CD8-positive, alpha-beta T cell (primary cell): ENCODE measurements at regions of chr12 and their contacts with region 1.

Region 1: DNA sequence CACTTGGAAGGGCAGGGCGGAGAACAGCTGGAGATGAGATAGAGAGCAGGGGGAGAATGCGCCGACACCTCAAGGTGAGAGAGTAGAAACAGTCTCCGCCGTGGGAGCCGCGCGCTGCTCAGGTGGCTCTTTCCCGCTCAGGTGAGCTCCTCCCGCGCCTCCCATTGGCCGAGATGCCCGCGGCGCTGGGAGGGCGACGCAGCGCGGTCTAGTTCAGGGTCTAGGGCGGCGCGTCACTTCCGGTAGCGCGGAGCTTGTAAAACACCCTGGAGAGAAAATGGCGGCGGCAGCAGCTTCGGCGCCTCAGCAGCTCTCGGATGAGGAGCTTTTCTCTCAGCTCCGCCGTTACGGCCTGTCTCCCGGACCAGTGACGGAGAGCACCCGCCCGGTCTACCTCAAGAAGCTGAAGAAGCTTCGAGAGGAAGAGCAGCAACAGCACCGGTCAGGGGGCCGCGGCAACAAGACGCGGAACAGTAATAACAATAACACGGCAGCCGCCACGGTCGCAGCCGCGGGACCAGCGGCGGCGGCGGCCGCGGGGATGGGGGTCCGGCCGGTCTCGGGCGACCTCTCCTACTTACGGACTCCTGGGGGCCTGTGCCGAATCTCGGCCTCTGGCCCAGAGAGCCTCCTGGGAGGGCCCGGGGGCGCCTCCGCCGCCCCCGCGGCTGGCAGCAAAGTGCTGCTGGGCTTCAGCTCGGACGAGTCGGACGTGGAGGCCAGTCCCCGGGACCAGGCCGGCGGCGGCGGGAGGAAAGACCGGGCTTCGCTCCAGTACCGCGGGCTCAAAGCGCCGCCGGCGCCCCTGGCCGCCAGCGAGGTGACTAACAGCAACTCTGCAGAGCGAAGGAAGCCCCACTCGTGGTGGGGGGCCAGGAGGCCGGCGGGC is at the start of gene LEMD3:
- DNase-seq: peak; percentile 87 to 98 (median 94)
- ATAC-seq: peak; percentile 87
- H3K4me3 ChIP-seq: peak within 1 kb of the TSS; percentile 82 to 91
- H3K4me3 Mint-ChIP-seq: peak within 1 kb of the TSS; percentile 99
- H3K27ac ChIP-seq: peak within 1 kb of the TSS; percentile 83 to 94
- H3K27ac Mint-ChIP-seq: peak within 1 kb of the TSS; percentile 100
- H3K4me1 ChIP-seq: peaks cover 37% of the 10 kb centered on the region
- H3K4me1 Mint-ChIP-seq: peaks cover 45% of the 10 kb centered on the region
- H3K27me3 ChIP-seq: no peaks in the 10 kb centered on the region
- H3K27me3 Mint-ChIP-seq: no peaks in the 10 kb centered on the region
- CTCF ChIP-seq: no peak
- total RNA-seq, gene LEMD3: 75.2 to 77.9 TPM

Region 2: GRCh38 chr12:63779498-63780481 is 1389.8 kb before region 1 on chr12 and contains the start of gene RXYLT1:
- CTCF ChIA-PET with region 1: no interaction called
- POLR2A ChIA-PET with region 1: no interaction called
- intact Hi-C with region 1: loop called in 1 of 2 experiments (anchors 5 kb)
- DNase-seq: peak; percentile 66 to 93 (median 83)
- ATAC-seq: peak; percentile 93
- H3K4me3 ChIP-seq: peak within 1 kb of the TSS; percentile 76 to 79
- H3K4me3 Mint-ChIP-seq: peak within 1 kb of the TSS; percentile 96
- H3K27ac ChIP-seq: peak within 1 kb of the TSS; percentile 74 to 87
- H3K27ac Mint-ChIP-seq: peak within 1 kb of the TSS; percentile 96
- H3K4me1 ChIP-seq: peaks cover 8% of the 10 kb centered on the region
- H3K4me1 Mint-ChIP-seq: peaks cover 32% of the 10 kb centered on the region
- H3K27me3 ChIP-seq: no peaks in the 10 kb centered on the region
- H3K27me3 Mint-ChIP-seq: no peaks in the 10 kb centered on the region
- CTCF ChIP-seq: no peak
- total RNA-seq, gene RXYLT1: 5.5 to 5.8 TPM

Region 3: DNA sequence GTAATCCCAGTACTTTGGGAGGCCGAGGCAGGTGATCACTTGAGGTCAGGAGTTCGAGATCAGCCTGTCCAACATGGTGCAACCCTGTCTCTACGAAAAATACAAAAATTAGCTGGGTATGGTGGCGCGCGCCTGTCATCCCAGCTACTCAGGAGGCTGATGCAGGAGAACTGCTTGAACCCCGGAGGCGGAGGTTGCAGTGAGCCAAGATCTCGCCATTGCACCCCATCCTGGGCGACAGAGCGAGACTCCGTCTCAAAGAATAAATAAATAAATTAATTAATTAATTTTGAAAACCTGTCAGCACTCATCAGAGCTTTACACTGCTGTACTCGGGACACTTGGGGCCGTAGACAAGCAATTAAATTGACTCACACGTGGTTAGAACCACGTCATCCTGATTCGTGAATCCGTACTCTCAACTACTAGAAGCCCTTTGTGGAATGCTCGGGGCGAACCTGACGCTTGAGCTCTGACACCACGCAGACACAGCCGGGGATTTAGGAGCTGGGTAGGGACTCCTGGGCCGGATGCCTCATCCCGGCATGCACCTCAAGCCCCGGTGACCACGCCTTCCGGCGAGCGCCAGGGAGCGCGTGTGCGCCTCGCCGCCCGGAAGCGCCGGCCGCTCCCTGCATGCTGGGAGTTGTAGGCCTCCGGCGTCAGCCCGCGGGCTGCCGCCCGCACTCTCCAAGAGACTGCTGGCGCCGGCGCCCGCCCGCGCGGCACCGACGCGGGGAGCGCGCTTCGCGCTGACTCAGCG is 765.7 kb before region 1 on chr12 and contains the start of gene XPOT:
- CTCF ChIA-PET with region 1: no interaction called
- POLR2A ChIA-PET with region 1: interaction called, 3 read pairs
- intact Hi-C with region 1: loop called in 1 of 2 experiments (anchors 1 kb)
- DNase-seq: peak; percentile 85 to 99 (median 90)
- ATAC-seq: peak; percentile 87
- H3K4me3 ChIP-seq: peak within 1 kb of the TSS; percentile 92 to 98
- H3K4me3 Mint-ChIP-seq: peak within 1 kb of the TSS; percentile 97
- H3K27ac ChIP-seq: peak within 1 kb of the TSS; percentile 79 to 85
- H3K27ac Mint-ChIP-seq: peak within 1 kb of the TSS; percentile 98
- H3K4me1 ChIP-seq: peaks cover 9% of the 10 kb centered on the region
- H3K4me1 Mint-ChIP-seq: peaks cover 28% of the 10 kb centered on the region
- H3K27me3 ChIP-seq: no peaks in the 10 kb centered on the region
- H3K27me3 Mint-ChIP-seq: no peaks in the 10 kb centered on the region
- CTCF ChIP-seq: no peak
- total RNA-seq, gene XPOT: 37.9 to 39.5 TPM

Region 4: GRCh38 chr12:65156366-65156841 is 13.2 kb before region 1 on chr12:
- CTCF ChIA-PET with region 1: interaction called, 4 read pairs
- POLR2A ChIA-PET with region 1: interaction called, 19 read pairs
- intact Hi-C with region 1: no loop called
- DNase-seq: peak in 3 of 9 experiments; percentile 15 to 44 (median 17)
- ATAC-seq: peak; percentile 54
- H3K4me3 ChIP-seq: no peak overlapping the region
- H3K4me3 Mint-ChIP-seq: peak overlapping the region; percentile 17
- H3K27ac ChIP-seq: peak overlapping the region in 1 of 2 experiments; percentile 57
- H3K27ac Mint-ChIP-seq: peak overlapping the region; percentile 27
- H3K4me1 ChIP-seq: peaks cover 9% of the 10 kb centered on the region
- H3K4me1 Mint-ChIP-seq: peaks cover 11% of the 10 kb centered on the region
- H3K27me3 ChIP-seq: no peaks in the 10 kb centered on the region
- H3K27me3 Mint-ChIP-seq: peaks cover 13% of the 10 kb centered on the region
- CTCF ChIP-seq: no peak

Region 5: GRCh38 chr12:65209655-65210043 is 40.1 kb after region 1 on chr12:
- CTCF ChIA-PET with region 1: no interaction called
- POLR2A ChIA-PET with region 1: interaction called, 12 read pairs
- intact Hi-C with region 1: loop called in 1 of 2 experiments (anchors 5 kb)
- DNase-seq: peak in 1 of 9 experiments; percentile 30
- ATAC-seq: no peak
- H3K4me3 ChIP-seq: no peak overlapping the region
- H3K4me3 Mint-ChIP-seq: peak overlapping the region; percentile 62
- H3K27ac ChIP-seq: peak overlapping the region in 1 of 2 experiments; percentile 17
- H3K27ac Mint-ChIP-seq: peak overlapping the region; percentile 72
- H3K4me1 ChIP-seq: peaks cover 32% of the 10 kb centered on the region
- H3K4me1 Mint-ChIP-seq: peaks cover 56% of the 10 kb centered on the region
- H3K27me3 ChIP-seq: no peaks in the 10 kb centered on the region
- H3K27me3 Mint-ChIP-seq: no peaks in the 10 kb centered on the region
- CTCF ChIP-seq: no peak

Region 6: DNA sequence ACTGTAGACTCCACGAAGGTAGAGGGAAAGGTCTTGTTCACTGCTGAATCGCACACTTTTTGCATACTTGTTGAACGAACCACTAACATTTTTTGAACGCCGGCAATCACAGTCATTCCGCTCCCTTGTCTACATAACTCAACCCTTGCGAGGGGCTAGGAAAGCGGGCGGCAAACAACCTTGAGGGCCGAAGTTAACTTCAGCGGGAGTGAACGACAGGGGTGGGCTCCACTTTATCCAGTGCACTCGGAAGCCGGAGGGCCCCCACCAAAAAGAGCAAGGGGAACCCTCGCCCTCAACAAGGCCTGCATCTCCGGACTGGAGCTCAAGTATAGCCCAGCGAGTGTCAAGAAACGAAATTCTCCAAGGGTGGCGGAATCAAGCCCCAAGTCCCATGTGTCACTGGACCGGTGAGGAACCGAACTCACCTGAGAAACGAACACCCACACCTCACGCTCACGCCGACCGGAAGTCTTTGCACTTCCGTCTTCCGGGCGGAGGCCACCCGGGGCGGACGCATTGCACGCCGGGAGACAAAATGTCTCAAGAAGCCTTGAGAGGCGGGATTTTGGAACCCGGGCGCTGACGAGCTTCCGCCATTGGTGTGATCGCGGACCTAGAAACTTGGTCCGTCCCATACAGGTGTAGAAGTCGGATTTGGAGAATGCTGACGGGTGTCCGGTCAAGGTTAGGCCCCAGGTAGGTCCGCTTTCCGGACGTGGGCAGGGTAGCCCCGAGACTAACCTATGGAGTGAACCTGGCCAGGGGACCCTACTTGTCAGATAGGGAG is 960.9 kb after region 1 on chr12 and contains the start of gene LLPH:
- CTCF ChIA-PET with region 1: no interaction called
- POLR2A ChIA-PET with region 1: no interaction called
- intact Hi-C with region 1: loop called (anchors 2 kb)
- DNase-seq: peak; percentile 75 to 94 (median 89)
- ATAC-seq: peak; percentile 92
- H3K4me3 ChIP-seq: peak within 1 kb of the TSS; percentile 91 to 97
- H3K4me3 Mint-ChIP-seq: peak within 1 kb of the TSS; percentile 96
- H3K27ac ChIP-seq: peak within 1 kb of the TSS; percentile 86 to 91
- H3K27ac Mint-ChIP-seq: peak within 1 kb of the TSS; percentile 99
- H3K4me1 ChIP-seq: peaks cover 22% of the 10 kb centered on the region
- H3K4me1 Mint-ChIP-seq: peaks cover 59% of the 10 kb centered on the region
- H3K27me3 ChIP-seq: no peaks in the 10 kb centered on the region
- H3K27me3 Mint-ChIP-seq: no peaks in the 10 kb centered on the region
- CTCF ChIP-seq: no peak
- total RNA-seq, gene LLPH: 29.1 to 30.9 TPM

Region 7: GRCh38 chr12:66288121-66288520 is 1118.6 kb after region 1 on chr12:
- CTCF ChIA-PET with region 1: no interaction called
- POLR2A ChIA-PET with region 1: no interaction called
- intact Hi-C with region 1: loop called in 1 of 2 experiments (anchors 10 kb)
- DNase-seq: peak in 8 of 9 experiments; percentile 38 to 91 (median 68)
- ATAC-seq: peak; percentile 98
- H3K4me3 ChIP-seq: peak overlapping the region in 1 of 2 experiments; percentile 33
- H3K4me3 Mint-ChIP-seq: peak overlapping the region; percentile 72
- H3K27ac ChIP-seq: peak overlapping the region in 1 of 2 experiments; percentile 9
- H3K27ac Mint-ChIP-seq: peak overlapping the region; percentile 83
- H3K4me1 ChIP-seq: peaks cover 77% of the 10 kb centered on the region
- H3K4me1 Mint-ChIP-seq: peaks cover 80% of the 10 kb centered on the region
- H3K27me3 ChIP-seq: no peaks in the 10 kb centered on the region
- H3K27me3 Mint-ChIP-seq: no peaks in the 10 kb centered on the region
- CTCF ChIP-seq: no peak

Region 8: DNA sequence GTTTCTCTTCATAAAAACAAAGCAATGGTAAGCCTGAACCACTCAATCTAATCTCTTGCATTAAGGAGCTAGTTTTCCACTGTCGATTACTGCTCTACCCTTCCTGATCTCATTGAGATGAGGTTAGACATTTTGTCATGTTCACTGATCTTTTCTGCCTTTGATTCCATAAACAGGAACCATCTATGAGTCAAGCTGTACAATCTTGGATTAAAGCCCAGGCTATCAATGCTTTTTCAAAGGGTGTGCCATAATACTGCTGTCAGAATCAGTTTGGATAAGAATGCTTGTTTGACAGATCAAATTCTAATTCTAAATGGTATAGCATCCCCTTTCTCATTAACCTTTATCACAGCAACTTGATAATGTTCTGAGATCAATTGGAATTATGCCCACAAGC is 1493.2 kb after region 1 on chr12:
- CTCF ChIA-PET with region 1: no interaction called
- POLR2A ChIA-PET with region 1: no interaction called
- intact Hi-C with region 1: no loop called
- DNase-seq: no peak
- ATAC-seq: no peak
- H3K4me3 ChIP-seq: no peak overlapping the region
- H3K4me3 Mint-ChIP-seq: no peak overlapping the region
- H3K27ac ChIP-seq: no peak overlapping the region
- H3K27ac Mint-ChIP-seq: no peak overlapping the region
- H3K4me1 ChIP-seq: no peaks in the 10 kb centered on the region
- H3K4me1 Mint-ChIP-seq: no peaks in the 10 kb centered on the region
- H3K27me3 ChIP-seq: peaks cover 0 to under 1% of the 10 kb centered on the region in 2 experiments
- H3K27me3 Mint-ChIP-seq: peaks cover 17% of the 10 kb centered on the region
- CTCF ChIP-seq: no peak